Caco-2 (cell line): ENCODE measurements at regions of chr21 and their contacts with region 1.

Region 1: GRCh38 chr21:32554832-32555436 is 30.4 kb downstream of the TCP10L start:
- DNase-seq: no peak
- H3K4me3 ChIP-seq: no peak overlapping the region
- H3K4me3 Mint-ChIP-seq: no peak overlapping the region
- H3K27ac Mint-ChIP-seq: no peak overlapping the region
- H3K4me1 ChIP-seq: no peaks in the 10 kb centered on the region
- H3K4me1 Mint-ChIP-seq: no peaks in the 10 kb centered on the region
- H3K27me3 ChIP-seq: no peaks in the 10 kb centered on the region
- H3K27me3 Mint-ChIP-seq: no peaks in the 10 kb centered on the region
- CTCF ChIP-seq: no peak

Region 2: DNA sequence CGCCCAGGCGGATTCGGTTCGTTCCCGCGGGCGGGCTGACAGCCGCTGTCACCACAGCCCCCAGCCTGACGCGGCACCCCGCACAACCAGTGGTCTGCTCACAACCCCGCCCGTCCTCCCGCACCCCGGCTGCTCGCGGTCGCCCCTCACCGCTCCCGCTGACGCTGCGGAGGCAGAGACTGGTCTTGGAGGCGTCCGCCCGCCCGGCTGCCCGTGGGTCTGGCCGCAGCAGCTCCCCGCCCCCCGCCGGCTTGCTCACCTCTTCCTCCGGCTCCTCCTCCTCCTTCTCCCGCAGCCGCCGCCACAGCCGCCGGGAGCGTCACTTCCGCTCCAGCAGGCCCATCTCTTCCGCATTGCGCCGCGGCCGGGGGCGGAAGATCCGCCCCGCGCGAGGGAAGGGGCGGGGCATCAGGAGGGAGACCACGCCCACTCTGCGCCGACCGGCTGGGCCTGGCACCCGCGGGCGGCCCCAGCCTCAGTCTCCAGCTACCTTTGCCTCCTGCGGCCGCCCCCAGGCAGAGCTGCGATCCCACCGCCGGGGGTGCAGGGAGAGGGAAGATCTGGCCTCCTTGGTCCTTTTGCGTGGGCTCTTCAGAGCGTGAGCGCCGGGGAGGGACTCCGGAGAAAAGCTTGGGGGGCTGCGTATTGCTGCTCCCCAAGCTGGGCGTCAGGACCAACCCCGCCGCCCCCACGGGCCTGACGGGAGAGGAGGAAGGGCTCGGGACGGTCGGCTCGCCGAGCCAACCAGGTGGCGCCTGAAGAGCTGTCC is 172.9 kb after region 1 on chr21 and contains the start of gene SYNJ1:
- CTCF ChIA-PET with region 1: no interaction called
- POLR2A ChIA-PET with region 1: no interaction called
- intact Hi-C with region 1: no loop called
- DNase-seq: peak; percentile 95
- H3K4me3 ChIP-seq: peak within 1 kb of the TSS; percentile 97
- H3K4me3 Mint-ChIP-seq: peak within 1 kb of the TSS; percentile 99
- H3K27ac Mint-ChIP-seq: peak within 1 kb of the TSS; percentile 91
- H3K4me1 ChIP-seq: peaks cover 4% of the 10 kb centered on the region; the same call in 1 of the 2 replicates
- H3K4me1 Mint-ChIP-seq: peaks cover 6% of the 10 kb centered on the region
- H3K27me3 ChIP-seq: no peaks in the 10 kb centered on the region
- H3K27me3 Mint-ChIP-seq: no peaks in the 10 kb centered on the region
- CTCF ChIP-seq: no peak
- total RNA-seq, gene SYNJ1: 8.3 and 11.5 TPM in 2 replicates

Region 3: DNA sequence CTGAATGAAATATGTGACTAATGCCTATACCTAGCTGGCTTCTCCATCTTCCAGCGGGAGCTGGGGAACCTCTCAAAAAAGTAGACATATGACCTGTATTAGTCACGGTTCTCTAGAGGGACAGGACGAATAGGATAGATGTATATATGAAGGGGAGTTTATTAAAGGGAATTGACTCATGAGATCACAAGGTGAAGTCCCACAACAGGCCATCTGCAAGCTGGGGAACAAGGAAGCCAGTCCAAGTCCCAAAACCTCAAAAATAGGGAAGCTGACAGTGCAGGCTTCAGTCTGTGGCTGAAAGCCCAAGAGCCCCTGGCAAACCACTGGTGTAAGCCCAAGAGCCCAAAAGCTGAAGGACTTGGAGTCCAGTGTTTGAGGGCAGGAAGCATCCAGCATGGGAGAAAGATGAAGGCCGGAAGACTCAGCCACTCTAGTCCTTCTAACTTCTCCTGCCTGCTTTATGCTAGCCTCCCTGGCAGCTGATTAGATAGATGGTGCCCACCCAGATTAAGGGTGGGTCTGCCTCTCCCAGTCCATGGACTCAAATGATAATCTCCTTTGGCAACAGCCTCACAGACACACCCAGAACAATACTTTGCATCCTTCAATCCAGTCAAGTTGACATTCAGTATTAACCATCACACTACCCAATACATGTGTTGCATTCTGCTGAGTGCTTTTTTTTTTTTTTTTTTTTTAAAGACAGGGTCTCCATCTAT is 534.6 kb after region 1 on chr21:
- CTCF ChIA-PET with region 1: no interaction called
- POLR2A ChIA-PET with region 1: interaction called, 12 read pairs
- intact Hi-C with region 1: no loop called
- DNase-seq: no peak
- H3K4me3 ChIP-seq: no peak overlapping the region
- H3K4me3 Mint-ChIP-seq: no peak overlapping the region
- H3K27ac Mint-ChIP-seq: no peak overlapping the region
- H3K4me1 ChIP-seq: no peaks in the 10 kb centered on the region
- H3K4me1 Mint-ChIP-seq: no peaks in the 10 kb centered on the region
- H3K27me3 ChIP-seq: no peaks in the 10 kb centered on the region
- H3K27me3 Mint-ChIP-seq: peaks cover 3% of the 10 kb centered on the region
- CTCF ChIP-seq: no peak